ENCODE measurements at regions of chr4 and their contacts with region 1.

Region 1: DNA sequence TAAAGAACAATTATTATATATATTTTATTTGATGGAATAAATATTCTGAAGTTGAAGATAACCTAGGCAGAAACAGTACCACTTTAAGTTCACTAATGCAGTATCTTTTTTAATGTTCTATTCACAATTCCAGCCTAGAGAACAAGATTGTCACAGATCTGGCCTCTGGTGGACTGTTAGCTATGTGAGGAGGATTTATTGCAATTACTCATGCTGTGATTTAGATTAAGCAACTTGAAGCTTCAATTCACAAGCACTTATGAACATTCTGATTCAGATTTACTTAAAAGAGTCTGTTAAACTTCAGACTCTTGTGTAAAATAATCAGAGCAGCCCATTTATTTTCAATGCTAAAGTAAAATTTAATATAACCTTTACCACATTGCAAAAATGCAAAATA is 1489.8 kb downstream of the STIM2 start:
- DNase-seq: no peak
- H3K4me3 ChIP-seq: no peak overlapping the region
- H3K27ac ChIP-seq: no peak overlapping the region
- H3K4me1 ChIP-seq: peaks cover 18% of the 10 kb centered on the region
- H3K27me3 ChIP-seq: no peaks in the 10 kb centered on the region
- CTCF ChIP-seq: no peak
- POLR2A ChIP-seq: no peak

Region 2: DNA sequence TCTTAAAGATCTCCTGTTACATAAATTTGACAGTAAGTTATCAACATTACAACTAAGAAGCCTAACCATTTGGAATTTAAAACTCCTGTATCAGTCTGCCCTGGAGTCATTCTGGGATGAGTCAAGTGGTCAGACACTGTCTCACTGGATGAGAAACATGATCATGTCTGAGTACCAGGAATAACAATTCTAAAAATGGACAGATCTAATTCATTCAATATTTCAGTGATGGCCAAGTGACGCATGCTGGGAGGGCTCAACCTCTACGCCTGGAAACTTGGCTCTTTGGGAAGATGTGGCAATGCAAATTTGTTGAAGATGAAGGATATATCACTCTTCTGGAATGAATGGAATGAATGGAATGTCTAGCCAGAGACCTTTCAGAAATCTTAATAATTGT is 62.6 kb before region 1 on chr4:
- CTCF ChIA-PET with region 1: no interaction called
- POLR2A ChIA-PET with region 1: no interaction called
- dilution Hi-C with region 1: no loop called
- intact Hi-C with region 1: loop called (anchors 5 kb)
- DNase-seq: peak; percentile 63
- H3K4me3 ChIP-seq: no peak overlapping the region
- H3K27ac ChIP-seq: peak overlapping the region; percentile 6
- H3K4me1 ChIP-seq: no peaks in the 10 kb centered on the region
- H3K27me3 ChIP-seq: no peaks in the 10 kb centered on the region
- CTCF ChIP-seq: no peak
- POLR2A ChIP-seq: no peak

Region 3: GRCh38 chr4:28334249-28334648 is 16.2 kb before region 1 on chr4:
- CTCF ChIA-PET with region 1: no interaction called
- POLR2A ChIA-PET with region 1: no interaction called
- dilution Hi-C with region 1: no loop called
- intact Hi-C with region 1: no loop called
- DNase-seq: no peak
- H3K4me3 ChIP-seq: no peak overlapping the region
- H3K27ac ChIP-seq: no peak overlapping the region
- H3K4me1 ChIP-seq: no peaks in the 10 kb centered on the region
- H3K27me3 ChIP-seq: no peaks in the 10 kb centered on the region
- CTCF ChIP-seq: no peak
- POLR2A ChIP-seq: no peak

Region 4: DNA sequence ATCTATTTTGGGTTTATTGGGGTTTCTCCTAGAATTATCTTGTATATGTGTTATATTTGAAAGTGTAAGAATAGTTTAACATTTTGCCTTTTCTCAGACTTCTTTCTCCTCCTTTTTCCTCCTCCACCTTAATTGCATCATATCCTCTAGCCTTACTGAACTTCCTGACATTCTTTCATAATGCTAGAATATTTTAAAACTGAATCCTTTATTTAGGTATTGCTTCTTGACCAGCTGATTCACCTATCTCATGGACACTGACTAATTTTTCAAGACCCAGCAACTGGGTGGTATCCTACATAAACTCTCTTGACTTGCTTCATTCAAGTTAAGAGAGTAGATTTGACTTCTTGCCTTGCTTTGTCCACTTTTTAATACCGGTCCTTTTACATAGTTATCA is 19.0 kb after region 1 on chr4:
- CTCF ChIA-PET with region 1: interaction called, 3 read pairs
- POLR2A ChIA-PET with region 1: no interaction called
- dilution Hi-C with region 1: no loop called
- intact Hi-C with region 1: loop called (anchors 1 kb)
- DNase-seq: peak; percentile 5
- H3K4me3 ChIP-seq: no peak overlapping the region
- H3K27ac ChIP-seq: no peak overlapping the region
- H3K4me1 ChIP-seq: peaks cover 7% of the 10 kb centered on the region
- H3K27me3 ChIP-seq: no peaks in the 10 kb centered on the region
- CTCF ChIP-seq: no peak
- POLR2A ChIP-seq: no peak

Region 5: DNA sequence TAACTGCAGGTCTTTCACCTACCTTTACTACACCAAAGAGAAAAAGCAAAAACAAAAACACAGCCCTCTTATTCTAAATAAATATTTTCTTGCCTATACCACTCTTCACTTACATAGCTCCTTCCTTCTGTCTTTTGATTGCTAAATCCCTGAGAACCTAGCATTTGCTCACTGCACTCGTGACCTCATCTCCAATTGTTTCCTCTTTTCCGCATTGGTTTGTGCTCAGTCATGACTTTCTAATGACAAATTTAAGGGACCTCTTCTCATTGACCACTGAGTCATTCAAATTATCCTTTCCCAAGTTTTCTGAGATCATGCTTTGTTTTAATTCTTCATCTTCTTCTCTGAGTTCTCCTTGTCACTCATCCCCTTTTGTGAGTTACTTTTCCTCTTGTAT is 207.3 kb after region 1 on chr4:
- CTCF ChIA-PET with region 1: no interaction called
- POLR2A ChIA-PET with region 1: no interaction called
- dilution Hi-C with region 1: no loop called
- intact Hi-C with region 1: loop called (anchors 5 kb)
- DNase-seq: peak; percentile 69
- H3K4me3 ChIP-seq: no peak overlapping the region
- H3K27ac ChIP-seq: no peak overlapping the region
- H3K4me1 ChIP-seq: peaks cover 6% of the 10 kb centered on the region
- H3K27me3 ChIP-seq: no peaks in the 10 kb centered on the region
- CTCF ChIP-seq: no peak
- POLR2A ChIP-seq: no peak

Measured in endothelial cell of umbilical vein (primary cell).